ENCODE measurements at regions of chr4 and their contacts with region 1.

Region 1: GRCh38 chr4:140153718-140154571 is at the start of gene MAML3:
- DNase-seq: peak; percentile 67 to 88 (median 83)
- ATAC-seq: peak; percentile 12
- H3K4me3 ChIP-seq: peak within 1 kb of the TSS; percentile 69 to 75
- H3K4me3 Mint-ChIP-seq: peak within 1 kb of the TSS; percentile 97
- H3K27ac ChIP-seq: peak within 1 kb of the TSS; percentile 12 to 78
- H3K27ac Mint-ChIP-seq: peak within 1 kb of the TSS; percentile 92
- H3K4me1 ChIP-seq: peaks cover 28% of the 10 kb centered on the region
- H3K4me1 Mint-ChIP-seq: peaks cover 40% of the 10 kb centered on the region
- H3K27me3 ChIP-seq: no peaks in the 10 kb centered on the region
- H3K27me3 Mint-ChIP-seq: no peaks in the 10 kb centered on the region
- CTCF ChIP-seq: no peak
- total RNA-seq, gene MAML3: 2.7 TPM

Region 2: GRCh38 chr4:139015269-139015947 is 1138.5 kb before region 1 on chr4 and contains the start of gene NOCT:
- CTCF ChIA-PET with region 1: no interaction called
- POLR2A ChIA-PET with region 1: no interaction called
- intact Hi-C with region 1: loop called in 1 of 2 experiments (anchors 10 kb)
- DNase-seq: peak; percentile 76 to 98 (median 90)
- ATAC-seq: peak; percentile 86
- H3K4me3 ChIP-seq: peak within 1 kb of the TSS; percentile 52 to 67
- H3K4me3 Mint-ChIP-seq: peak within 1 kb of the TSS; percentile 91
- H3K27ac ChIP-seq: peak within 1 kb of the TSS; percentile 75 to 92
- H3K27ac Mint-ChIP-seq: peak within 1 kb of the TSS; percentile 99
- H3K4me1 ChIP-seq: peaks cover 7% of the 10 kb centered on the region
- H3K4me1 Mint-ChIP-seq: peaks cover 30% of the 10 kb centered on the region
- H3K27me3 ChIP-seq: no peaks in the 10 kb centered on the region
- H3K27me3 Mint-ChIP-seq: no peaks in the 10 kb centered on the region
- CTCF ChIP-seq: no peak
- total RNA-seq, gene NOCT: 45.7 to 49.6 TPM

Region 3: GRCh38 chr4:139295206-139295941 is 858.6 kb before region 1 on chr4:
- CTCF ChIA-PET with region 1: no interaction called
- POLR2A ChIA-PET with region 1: no interaction called
- intact Hi-C with region 1: loop called (anchors 5 to 10 kb)
- DNase-seq: peak; percentile 94 to 100 (median 99)
- ATAC-seq: peak; percentile 91
- H3K4me3 ChIP-seq: peak overlapping the region; percentile 65 to 91
- H3K4me3 Mint-ChIP-seq: peak overlapping the region; percentile 91
- H3K27ac ChIP-seq: peak overlapping the region; percentile 74 to 87
- H3K27ac Mint-ChIP-seq: peak overlapping the region; percentile 95
- H3K4me1 ChIP-seq: peaks cover 31% of the 10 kb centered on the region
- H3K4me1 Mint-ChIP-seq: peaks cover 37% of the 10 kb centered on the region
- H3K27me3 ChIP-seq: no peaks in the 10 kb centered on the region
- H3K27me3 Mint-ChIP-seq: no peaks in the 10 kb centered on the region
- CTCF ChIP-seq: peak; percentile 77

Region 4: GRCh38 chr4:139554893-139555704 is 598.8 kb before region 1 on chr4:
- CTCF ChIA-PET with region 1: no interaction called
- POLR2A ChIA-PET with region 1: interaction called, 3 read pairs
- intact Hi-C with region 1: loop called in 1 of 2 experiments (anchors 5 kb)
- DNase-seq: peak; percentile 43 to 89 (median 74)
- ATAC-seq: peak; percentile 75
- H3K4me3 ChIP-seq: peak overlapping the region; percentile 79 to 84
- H3K4me3 Mint-ChIP-seq: peak overlapping the region; percentile 94
- H3K27ac ChIP-seq: peak overlapping the region in 1 of 2 experiments; percentile 53
- H3K27ac Mint-ChIP-seq: peak overlapping the region; percentile 95
- H3K4me1 ChIP-seq: peaks cover 9% of the 10 kb centered on the region
- H3K4me1 Mint-ChIP-seq: peaks cover 31% of the 10 kb centered on the region
- H3K27me3 ChIP-seq: peaks cover 0 to 9% of the 10 kb centered on the region in 2 experiments
- H3K27me3 Mint-ChIP-seq: peaks cover 9% of the 10 kb centered on the region
- CTCF ChIP-seq: no peak

Region 5: GRCh38 chr4:140071806-140072205 is 82.1 kb before region 1 on chr4:
- CTCF ChIA-PET with region 1: interaction called, 5 read pairs
- POLR2A ChIA-PET with region 1: interaction called, 9 read pairs
- intact Hi-C with region 1: loop called (anchors 2 to 5 kb)
- DNase-seq: peak; percentile 27 to 88 (median 62)
- ATAC-seq: peak; percentile 88
- H3K4me3 ChIP-seq: no peak overlapping the region
- H3K4me3 Mint-ChIP-seq: peak overlapping the region; percentile 74
- H3K27ac ChIP-seq: no peak overlapping the region
- H3K27ac Mint-ChIP-seq: peak overlapping the region; percentile 90
- H3K4me1 ChIP-seq: peaks cover 28% of the 10 kb centered on the region
- H3K4me1 Mint-ChIP-seq: peaks cover 48% of the 10 kb centered on the region
- H3K27me3 ChIP-seq: peaks cover 0 to 2% of the 10 kb centered on the region in 2 experiments
- H3K27me3 Mint-ChIP-seq: no peaks in the 10 kb centered on the region
- CTCF ChIP-seq: no peak

Region 6: DNA sequence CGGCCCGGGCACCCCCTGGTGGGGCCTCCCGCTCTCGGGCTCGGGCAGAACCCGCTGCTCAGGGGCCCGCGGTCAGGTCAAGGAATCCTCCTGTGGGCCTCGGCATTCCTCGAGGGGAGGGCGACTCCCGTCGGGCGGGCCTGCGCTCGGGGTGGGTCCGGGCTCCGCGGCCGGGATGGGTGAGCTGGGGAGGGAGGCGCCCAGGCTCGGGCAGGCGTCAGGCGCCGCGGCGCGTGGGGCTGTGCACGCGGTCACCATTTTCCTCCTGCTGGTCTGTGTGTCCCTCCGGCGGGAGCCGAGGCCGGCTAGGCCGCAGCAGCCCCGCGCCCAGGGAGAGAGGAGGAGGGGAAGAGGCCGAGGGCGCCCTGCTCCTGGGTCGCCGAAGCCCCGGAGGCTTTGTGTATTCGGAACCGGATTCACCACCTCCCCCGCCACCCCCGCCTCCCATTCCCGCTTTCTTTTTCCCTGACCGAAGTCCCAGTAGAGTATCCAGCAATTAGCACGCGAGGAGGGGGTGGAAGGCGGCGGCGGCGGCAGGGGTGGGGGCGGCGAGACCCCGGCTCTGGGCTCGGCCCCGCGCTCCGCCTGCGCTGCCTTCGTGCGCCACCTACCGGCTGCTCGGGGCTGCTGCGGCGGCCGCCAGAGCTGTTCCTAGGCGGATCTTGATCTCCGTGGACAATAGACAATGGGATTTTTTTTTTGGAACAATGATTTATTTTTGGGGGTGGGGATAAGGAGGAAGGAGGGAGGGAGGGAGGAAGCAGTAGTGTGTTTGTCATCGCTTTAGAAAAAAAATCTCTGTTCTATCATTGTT is 99.0 kb after region 1 on chr4:
- CTCF ChIA-PET with region 1: interaction called, 16 read pairs
- POLR2A ChIA-PET with region 1: interaction called, 3 read pairs
- intact Hi-C with region 1: loop called (anchors 1 kb)
- DNase-seq: peak; percentile 16 to 80 (median 64)
- ATAC-seq: peak; percentile 78
- H3K4me3 ChIP-seq: peak overlapping the region; percentile 53 to 58
- H3K4me3 Mint-ChIP-seq: peak overlapping the region; percentile 75
- H3K27ac ChIP-seq: peak overlapping the region in 1 of 2 experiments; percentile 25
- H3K27ac Mint-ChIP-seq: no peak overlapping the region
- H3K4me1 ChIP-seq: no peaks in the 10 kb centered on the region
- H3K4me1 Mint-ChIP-seq: peaks cover 10% of the 10 kb centered on the region
- H3K27me3 ChIP-seq: peaks cover 0 to 2% of the 10 kb centered on the region in 2 experiments
- H3K27me3 Mint-ChIP-seq: peaks cover 11% of the 10 kb centered on the region
- CTCF ChIP-seq: peak; percentile 91

Region 7: DNA sequence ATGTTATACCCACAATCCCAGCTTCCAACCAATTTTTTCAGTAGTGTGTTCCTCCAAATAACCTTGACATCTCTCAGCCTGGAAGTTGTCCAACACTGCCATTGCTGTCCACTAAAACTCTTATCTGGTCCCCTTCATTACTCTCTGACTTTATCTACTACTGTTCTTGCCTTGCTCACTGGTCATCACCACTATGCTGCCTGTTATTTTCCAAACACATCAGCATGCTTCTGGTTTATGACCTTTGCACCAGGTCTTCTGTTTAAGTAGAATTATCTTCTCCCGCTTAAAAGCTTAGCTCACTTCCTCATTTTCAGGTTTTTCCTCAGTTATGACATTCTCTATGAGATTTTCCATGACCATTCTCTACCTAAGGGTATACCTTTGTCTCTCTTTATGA is 375.5 kb after region 1 on chr4:
- CTCF ChIA-PET with region 1: no interaction called
- POLR2A ChIA-PET with region 1: no interaction called
- intact Hi-C with region 1: loop called in 1 of 2 experiments (anchors 5 kb)
- DNase-seq: no peak
- ATAC-seq: no peak
- H3K4me3 ChIP-seq: no peak overlapping the region
- H3K4me3 Mint-ChIP-seq: no peak overlapping the region
- H3K27ac ChIP-seq: no peak overlapping the region
- H3K27ac Mint-ChIP-seq: no peak overlapping the region
- H3K4me1 ChIP-seq: peaks cover 4% of the 10 kb centered on the region
- H3K4me1 Mint-ChIP-seq: peaks cover 16% of the 10 kb centered on the region
- H3K27me3 ChIP-seq: no peaks in the 10 kb centered on the region
- H3K27me3 Mint-ChIP-seq: no peaks in the 10 kb centered on the region
- CTCF ChIP-seq: no peak

Measured in CD8-positive, alpha-beta T cell (primary cell).